ENCODE measurements at regions of chr17 and their contacts with region 1.

Region 1: DNA sequence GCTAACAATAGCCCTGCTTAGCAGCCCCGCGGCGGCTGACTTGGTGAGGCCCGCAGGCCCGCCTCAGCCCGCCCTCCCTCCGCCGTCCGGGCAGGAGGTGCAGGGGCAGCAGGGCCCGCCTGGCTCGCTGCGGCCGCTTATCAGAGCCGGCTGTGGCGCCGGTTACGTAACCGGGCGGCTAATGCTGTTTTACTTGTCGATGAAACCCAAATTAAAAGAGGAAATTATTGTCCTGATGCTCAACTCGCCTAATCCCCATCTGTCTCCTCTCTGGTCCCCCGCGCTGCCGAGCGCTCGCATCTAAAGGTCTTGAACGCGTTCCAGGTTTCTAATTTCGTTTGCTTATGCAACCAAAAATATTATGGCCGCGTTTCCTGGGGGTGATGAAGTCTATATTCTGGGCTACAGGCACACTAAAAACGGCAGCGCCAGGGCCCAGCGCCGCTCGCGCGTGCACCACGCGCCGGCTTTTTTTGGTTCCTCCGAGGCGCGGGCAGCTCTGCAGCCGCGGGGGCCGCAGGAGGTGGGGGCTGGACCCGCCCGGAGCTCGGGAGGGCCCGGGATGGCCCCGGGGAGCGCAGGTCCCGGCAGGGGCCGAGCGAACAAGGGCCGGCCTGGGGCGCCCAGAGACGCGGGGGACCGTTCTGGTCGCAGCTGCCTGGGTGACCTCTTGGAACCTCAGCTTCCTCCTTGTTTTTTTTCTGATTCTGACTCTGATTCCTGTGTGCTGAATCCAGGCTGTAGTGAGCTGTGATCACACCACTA is 65.2 kb upstream of the TOB1 start:
- DNase-seq: peak; percentile 82
- H3K4me3 ChIP-seq: peak overlapping the region; percentile 37 to 67 (median 61)
- H3K27ac ChIP-seq: peak overlapping the region; percentile 66
- H3K4me1 ChIP-seq: peaks cover 11% of the 10 kb centered on the region
- H3K27me3 ChIP-seq: no peaks in the 10 kb centered on the region
- CTCF ChIP-seq: no peak
- POLR2A ChIP-seq: no peak

Region 2: GRCh38 chr17:50919321-50920085 is 11.8 kb before region 1 on chr17:
- CTCF ChIA-PET with region 1: interaction called, 3 read pairs
- POLR2A ChIA-PET with region 1: no interaction called
- dilution Hi-C with region 1: no loop called
- intact Hi-C with region 1: loop called (anchors 1 kb)
- DNase-seq: peak; percentile 81
- H3K4me3 ChIP-seq: no peak overlapping the region
- H3K27ac ChIP-seq: no peak overlapping the region
- H3K4me1 ChIP-seq: peaks cover 4% of the 10 kb centered on the region
- H3K27me3 ChIP-seq: no peaks in the 10 kb centered on the region
- CTCF ChIP-seq: no peak
- POLR2A ChIP-seq: no peak